WTC11 (cell line): ENCODE measurements at regions of chr4 and their contacts with region 1.

Region 1: GRCh38 chr4:93147524-93148212 is 680.9 kb upstream of the ATOH1 start:
- DNase-seq: peak; percentile 52
- ATAC-seq: peak; percentile 94
- H3K4me3 Mint-ChIP-seq: peak overlapping the region; percentile 47
- H3K27ac Mint-ChIP-seq: peak overlapping the region; percentile 71
- H3K4me1 Mint-ChIP-seq: peaks cover 55% of the 10 kb centered on the region
- H3K27me3 Mint-ChIP-seq: no peaks in the 10 kb centered on the region
- CTCF ChIP-seq: no peak

Region 2: GRCh38 chr4:93018243-93018642 is 129.4 kb before region 1 on chr4:
- CTCF ChIA-PET with region 1: no interaction called
- POLR2A ChIA-PET with region 1: no interaction called
- DNase-seq: no peak
- ATAC-seq: no peak
- H3K4me3 Mint-ChIP-seq: no peak overlapping the region
- H3K27ac Mint-ChIP-seq: no peak overlapping the region
- H3K4me1 Mint-ChIP-seq: peaks cover 16% of the 10 kb centered on the region
- H3K27me3 Mint-ChIP-seq: no peaks in the 10 kb centered on the region
- CTCF ChIP-seq: no peak

Region 3: DNA sequence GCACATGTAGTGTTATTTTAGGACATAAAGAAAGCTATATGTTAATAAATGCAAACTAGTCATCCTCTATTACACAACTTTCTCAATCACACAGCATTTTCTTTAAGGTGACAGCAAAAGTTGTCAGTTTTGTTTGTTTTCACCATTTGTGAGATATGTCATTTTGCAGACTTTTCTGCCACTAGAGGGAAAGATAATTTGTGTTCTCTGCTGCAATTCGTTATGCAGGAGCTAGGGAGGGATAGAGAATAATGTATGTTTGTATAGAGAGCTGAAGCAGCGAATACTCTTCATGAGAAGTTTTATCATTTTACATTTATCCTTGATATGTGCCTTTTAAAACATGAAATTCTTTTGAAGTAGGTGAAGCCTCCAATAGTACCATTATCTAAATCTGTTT is 10.3 kb after region 1 on chr4:
- CTCF ChIA-PET with region 1: interaction called, 11 read pairs
- POLR2A ChIA-PET with region 1: no interaction called
- DNase-seq: no peak
- ATAC-seq: peak; percentile 43
- H3K4me3 Mint-ChIP-seq: no peak overlapping the region
- H3K27ac Mint-ChIP-seq: no peak overlapping the region
- H3K4me1 Mint-ChIP-seq: peaks cover 43% of the 10 kb centered on the region
- H3K27me3 Mint-ChIP-seq: no peaks in the 10 kb centered on the region
- CTCF ChIP-seq: no peak